Calu3 (cell line): ENCODE measurements at regions of chr1 and their contacts with region 1.

Region 1: DNA sequence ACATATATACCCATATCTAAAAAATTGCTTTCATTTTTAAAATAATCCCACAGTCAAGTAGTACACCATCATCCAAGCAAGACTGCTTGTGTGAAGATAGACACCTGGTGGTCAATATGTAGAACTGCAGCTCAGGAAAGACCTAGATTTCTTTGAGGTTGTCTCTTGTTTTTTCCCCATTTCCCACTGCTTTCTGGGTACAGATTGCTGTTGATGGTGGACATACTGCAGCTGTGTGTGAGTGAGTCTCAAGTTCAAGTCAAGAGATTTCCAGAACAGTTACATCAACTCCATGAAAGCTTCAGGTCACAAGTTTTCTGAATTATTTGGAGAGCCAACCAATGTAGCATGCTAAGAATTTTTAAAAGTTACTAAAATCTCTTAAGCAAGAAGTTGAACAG is 306.4 kb downstream of the DUSP10 start:
- DNase-seq: no peak
- H3K4me3 Mint-ChIP-seq: no peak overlapping the region
- H3K27ac Mint-ChIP-seq: no peak overlapping the region
- H3K4me1 Mint-ChIP-seq: peaks cover 20% of the 10 kb centered on the region
- H3K27me3 Mint-ChIP-seq: no peaks in the 10 kb centered on the region
- CTCF ChIP-seq: peak; percentile 89

Region 2: GRCh38 chr1:220810179-220810653 is 625.3 kb before region 1 on chr1:
- CTCF ChIA-PET with region 1: no interaction called
- intact Hi-C with region 1: loop called (anchors 5 kb)
- DNase-seq: peak; percentile 46
- H3K4me3 Mint-ChIP-seq: no peak overlapping the region
- H3K27ac Mint-ChIP-seq: no peak overlapping the region
- H3K4me1 Mint-ChIP-seq: no peaks in the 10 kb centered on the region
- H3K27me3 Mint-ChIP-seq: no peaks in the 10 kb centered on the region
- CTCF ChIP-seq: peak; percentile 73

Region 3: GRCh38 chr1:220908757-220909156 is 526.7 kb before region 1 on chr1:
- CTCF ChIA-PET with region 1: interaction called, 5 read pairs
- intact Hi-C with region 1: loop called (anchors 1 kb)
- DNase-seq: peak; percentile 33
- H3K4me3 Mint-ChIP-seq: no peak overlapping the region
- H3K27ac Mint-ChIP-seq: no peak overlapping the region
- H3K4me1 Mint-ChIP-seq: peaks cover 28% of the 10 kb centered on the region
- H3K27me3 Mint-ChIP-seq: peaks cover 2% of the 10 kb centered on the region
- CTCF ChIP-seq: peak; percentile 49

Region 4: DNA sequence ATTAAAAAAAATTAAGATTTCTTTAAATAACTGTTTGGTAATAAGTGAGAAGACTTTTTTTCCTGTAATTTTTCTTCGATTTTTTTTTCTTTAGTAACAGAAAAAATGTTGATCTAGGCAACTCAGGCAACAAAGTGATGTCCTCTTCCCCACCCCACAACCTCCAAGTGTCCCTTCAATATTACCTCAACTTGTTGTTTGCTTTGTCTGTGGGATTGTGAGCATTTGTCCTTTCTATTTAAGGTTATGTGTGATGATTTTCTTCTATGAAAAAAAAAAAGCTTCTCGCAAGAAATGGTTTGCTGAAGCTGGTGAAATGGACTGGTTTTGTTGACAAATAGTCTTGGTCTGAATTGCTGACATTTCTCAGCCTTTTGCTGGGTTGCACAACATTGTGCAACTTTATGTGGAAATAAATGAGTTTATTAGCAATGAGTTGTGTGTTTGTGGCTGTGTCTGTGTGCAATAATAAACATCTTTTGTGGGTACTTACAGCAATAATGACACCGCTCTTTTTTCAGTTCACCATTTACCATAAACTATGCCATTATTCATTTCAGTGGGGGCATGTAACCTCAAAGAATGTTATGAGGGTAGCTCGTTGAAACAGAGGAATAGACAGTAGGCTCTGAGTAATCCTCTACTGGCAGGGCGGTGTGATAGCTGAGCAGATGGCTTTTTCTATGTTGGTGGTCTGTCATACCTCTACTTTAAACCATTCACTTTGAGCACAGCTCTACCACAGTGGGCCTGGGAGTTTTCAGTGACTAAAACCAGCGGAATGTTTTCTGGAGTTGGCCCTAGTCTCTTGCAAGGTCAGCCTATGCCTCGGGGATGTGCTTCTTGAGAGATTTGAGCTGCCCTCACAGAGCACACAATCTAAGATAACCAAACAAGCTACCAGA is 337.8 kb before region 1 on chr1:
- CTCF ChIA-PET with region 1: no interaction called
- intact Hi-C with region 1: no loop called
- DNase-seq: no peak
- H3K4me3 Mint-ChIP-seq: no peak overlapping the region
- H3K27ac Mint-ChIP-seq: no peak overlapping the region
- H3K4me1 Mint-ChIP-seq: peaks cover 34% of the 10 kb centered on the region
- H3K27me3 Mint-ChIP-seq: no peaks in the 10 kb centered on the region
- CTCF ChIP-seq: no peak

Region 5: GRCh38 chr1:221203224-221204054 is 232.1 kb before region 1 on chr1:
- CTCF ChIA-PET with region 1: interaction called, 5 read pairs
- intact Hi-C with region 1: loop called (anchors 5 kb)
- DNase-seq: peak; percentile 90
- H3K4me3 Mint-ChIP-seq: no peak overlapping the region
- H3K27ac Mint-ChIP-seq: no peak overlapping the region
- H3K4me1 Mint-ChIP-seq: no peaks in the 10 kb centered on the region
- H3K27me3 Mint-ChIP-seq: no peaks in the 10 kb centered on the region
- CTCF ChIP-seq: peak; percentile 86

Region 6: DNA sequence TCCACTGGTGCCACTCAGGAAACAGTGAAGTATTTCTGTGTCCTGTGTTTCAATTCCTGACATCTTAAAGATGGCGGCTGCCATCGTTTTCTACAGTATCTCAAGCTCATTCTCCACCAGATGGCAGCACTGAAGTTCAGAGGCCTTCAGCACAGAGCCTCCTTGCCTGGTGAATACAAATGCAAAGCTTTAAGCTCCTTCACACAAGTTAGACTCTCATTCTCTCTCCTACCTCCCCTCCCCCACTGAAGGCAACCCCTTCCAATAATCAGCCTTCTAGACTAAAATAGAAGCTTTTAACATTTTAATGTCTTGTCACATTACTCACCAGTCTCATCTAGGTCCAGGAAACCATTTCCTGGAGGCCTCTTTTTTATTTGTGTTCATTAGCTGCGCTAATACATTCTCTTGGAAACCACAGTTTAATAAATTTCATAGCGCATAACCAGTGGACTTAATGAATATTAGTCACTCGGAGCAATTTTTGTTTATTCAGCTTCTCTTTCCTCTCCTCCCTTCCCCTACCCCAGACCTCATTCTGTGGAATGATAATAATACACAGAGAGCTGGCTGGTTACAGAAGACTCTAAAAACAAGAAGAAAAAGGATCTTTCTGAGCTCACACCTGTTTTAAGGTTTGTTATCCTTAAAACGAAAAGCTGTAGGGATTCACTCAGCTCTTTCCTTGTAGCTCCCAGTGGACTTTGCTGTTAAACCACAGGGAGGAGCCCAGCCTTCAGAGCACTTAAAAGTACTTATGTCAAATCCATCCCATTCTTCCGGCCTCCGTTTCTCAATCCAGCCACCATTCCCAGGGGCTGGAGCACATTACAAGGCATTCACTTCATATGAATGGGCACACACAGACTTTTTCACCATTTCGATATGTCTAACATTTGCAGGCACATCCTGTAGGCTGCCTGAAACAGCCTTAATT is 171.4 kb before region 1 on chr1:
- CTCF ChIA-PET with region 1: interaction called, 15 read pairs
- intact Hi-C with region 1: loop called (anchors 2 kb)
- DNase-seq: peak; percentile 37
- H3K4me3 Mint-ChIP-seq: no peak overlapping the region
- H3K27ac Mint-ChIP-seq: no peak overlapping the region
- H3K4me1 Mint-ChIP-seq: no peaks in the 10 kb centered on the region
- H3K27me3 Mint-ChIP-seq: peaks cover 20% of the 10 kb centered on the region
- CTCF ChIP-seq: peak; percentile 37

Region 7: GRCh38 chr1:221478050-221478949 is 42.8 kb after region 1 on chr1:
- CTCF ChIA-PET with region 1: no interaction called
- intact Hi-C with region 1: no loop called
- DNase-seq: peak; percentile 81
- H3K4me3 Mint-ChIP-seq: no peak overlapping the region
- H3K27ac Mint-ChIP-seq: no peak overlapping the region
- H3K4me1 Mint-ChIP-seq: peaks cover 14% of the 10 kb centered on the region
- H3K27me3 Mint-ChIP-seq: no peaks in the 10 kb centered on the region
- CTCF ChIP-seq: peak; percentile 71